ENCODE measurements at regions of chr4 and their contacts with region 1.

Region 1: GRCh38 chr4:6873792-6874461 is 35.7 kb upstream of the TBC1D14 start:
- DNase-seq: no peak
- H3K4me3 ChIP-seq: no peak overlapping the region
- H3K27ac ChIP-seq: no peak overlapping the region
- H3K27me3 ChIP-seq: no peaks in the 10 kb centered on the region
- CTCF ChIP-seq: peak; percentile 87

Region 2: GRCh38 chr4:6608758-6609414 is 265.0 kb before region 1 on chr4:
- CTCF ChIA-PET with region 1: no interaction called
- POLR2A ChIA-PET with region 1: no interaction called
- DNase-seq: no peak
- H3K4me3 ChIP-seq: no peak overlapping the region
- H3K27ac ChIP-seq: no peak overlapping the region
- H3K27me3 ChIP-seq: no peaks in the 10 kb centered on the region
- CTCF ChIP-seq: no peak

Region 3: GRCh38 chr4:6716018-6716911 is 157.7 kb before region 1 on chr4 and contains the start of gene BLOC1S4:
- CTCF ChIA-PET with region 1: interaction called, 197 read pairs
- POLR2A ChIA-PET with region 1: no interaction called
- DNase-seq: peak; percentile 85
- H3K4me3 ChIP-seq: peak within 1 kb of the TSS; percentile 94
- H3K27ac ChIP-seq: peak within 1 kb of the TSS; percentile 39
- H3K27me3 ChIP-seq: peaks cover 3% of the 10 kb centered on the region
- CTCF ChIP-seq: no peak
- polyA plus RNA-seq, gene BLOC1S4: 14.5 and 15.4 TPM in 2 replicates

Region 4: DNA sequence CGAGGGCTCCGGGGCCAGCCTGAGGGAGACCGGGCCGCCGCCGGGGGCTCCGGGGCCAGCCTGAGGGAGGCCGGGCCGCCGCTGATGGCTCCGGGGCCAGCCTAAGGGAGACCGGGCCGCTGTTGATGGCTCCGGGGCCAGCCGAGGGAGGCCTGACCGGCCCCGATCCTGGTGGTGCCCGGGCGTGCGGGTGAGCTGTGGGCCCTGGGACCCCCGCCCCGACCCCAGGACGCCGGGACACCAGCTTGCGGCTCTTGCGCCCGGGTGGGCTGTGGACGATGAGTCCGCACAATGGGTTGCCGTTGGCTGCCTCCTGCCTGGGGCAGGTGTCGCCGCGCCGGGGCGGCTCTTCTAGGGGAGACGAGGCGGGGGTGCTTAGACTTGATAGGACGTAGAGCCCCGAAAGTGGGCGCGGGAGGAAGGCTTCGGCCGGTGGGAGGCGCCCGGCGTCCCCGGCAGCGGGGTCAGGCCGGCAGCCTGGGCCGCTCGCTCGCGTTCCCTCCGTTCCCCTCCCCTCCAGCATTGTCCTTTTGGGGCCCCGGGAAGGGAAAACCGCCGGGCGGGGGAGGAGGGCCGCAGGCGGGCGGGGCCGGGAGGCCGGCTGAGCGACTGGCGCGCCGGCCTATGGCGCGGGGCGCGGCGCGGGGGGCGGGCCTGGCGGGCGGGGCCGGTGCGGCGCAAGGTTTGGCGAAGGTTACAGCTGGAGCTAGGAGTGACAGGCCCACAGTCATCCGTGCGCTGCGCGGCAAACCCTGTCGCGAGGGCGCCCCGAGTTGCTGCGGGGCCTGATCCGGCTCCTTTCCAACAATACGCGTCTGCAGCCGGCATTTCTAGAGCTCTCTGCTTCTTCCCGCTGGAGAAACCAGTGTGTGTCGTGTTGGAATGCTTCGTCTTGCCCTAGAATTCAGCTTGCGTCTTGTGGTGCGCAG is 90.6 kb before region 1 on chr4:
- CTCF ChIA-PET with region 1: interaction called, 16 read pairs
- POLR2A ChIA-PET with region 1: no interaction called
- DNase-seq: peak; percentile 38
- H3K4me3 ChIP-seq: peak overlapping the region; percentile 87
- H3K27ac ChIP-seq: peak overlapping the region; percentile 91
- H3K27me3 ChIP-seq: no peaks in the 10 kb centered on the region
- CTCF ChIP-seq: no peak

Region 5: GRCh38 chr4:6855692-6856297 is 18.1 kb before region 1 on chr4:
- CTCF ChIA-PET with region 1: interaction called, 25 read pairs
- POLR2A ChIA-PET with region 1: no interaction called
- DNase-seq: peak; percentile 74
- H3K4me3 ChIP-seq: no peak overlapping the region
- H3K27ac ChIP-seq: peak overlapping the region; percentile 93
- H3K27me3 ChIP-seq: no peaks in the 10 kb centered on the region
- CTCF ChIP-seq: no peak

Region 6: GRCh38 chr4:6909073-6909965 is 35.4 kb after region 1 on chr4 and contains the start of gene TBC1D14:
- CTCF ChIA-PET with region 1: interaction called, 11 read pairs
- POLR2A ChIA-PET with region 1: interaction called, 5 read pairs
- DNase-seq: peak; percentile 51
- H3K4me3 ChIP-seq: peak within 1 kb of the TSS; percentile 73
- H3K27ac ChIP-seq: peak within 1 kb of the TSS; percentile 94
- H3K27me3 ChIP-seq: peaks cover 3% of the 10 kb centered on the region
- CTCF ChIP-seq: peak; percentile 23; the same call in 1 of the 2 replicates
- polyA plus RNA-seq, gene TBC1D14: 46.3 and 47.1 TPM in 2 replicates

Region 7: DNA sequence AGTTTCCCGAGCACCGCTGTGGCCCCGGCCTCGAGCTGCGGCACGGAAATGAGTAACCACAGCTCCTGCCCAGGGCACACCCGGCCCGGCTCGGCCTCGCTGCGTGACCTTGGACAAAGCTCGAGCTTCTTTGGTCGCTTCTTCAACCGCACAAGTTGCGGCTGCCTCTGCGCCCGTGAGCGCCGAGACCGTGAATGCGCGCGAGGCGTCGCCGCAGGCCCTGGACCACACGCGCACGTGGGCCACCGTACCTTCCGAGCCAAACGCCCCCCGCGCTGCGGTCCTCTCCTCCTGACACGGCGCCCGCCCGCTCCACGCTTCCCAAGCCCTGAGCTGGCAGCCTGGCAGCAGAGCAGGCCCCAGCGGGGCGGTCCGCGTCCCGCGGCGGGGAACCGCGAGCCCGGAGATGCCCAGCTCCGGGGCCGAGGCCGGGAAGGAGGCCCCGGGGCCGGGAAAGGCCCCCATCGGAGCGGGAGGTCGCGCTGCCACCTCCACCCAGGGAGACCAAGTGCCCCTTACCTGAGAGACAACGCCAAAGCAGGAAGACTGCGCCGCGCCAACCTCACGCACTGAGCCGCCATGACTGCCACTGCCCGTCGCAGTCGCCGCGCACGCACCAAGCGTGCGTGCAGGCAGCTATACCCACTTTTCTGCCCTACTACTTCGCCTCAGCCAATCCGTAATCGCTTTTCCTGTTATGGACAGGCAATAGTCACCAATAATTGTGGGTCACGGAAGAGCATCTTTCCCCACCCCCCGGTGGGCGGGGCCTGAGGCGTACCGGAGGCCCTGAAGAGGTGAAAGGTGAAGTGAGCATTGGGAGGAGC is 193.7 kb after region 1 on chr4 and contains the start of gene GRPEL1:
- CTCF ChIA-PET with region 1: interaction called, 30 read pairs
- POLR2A ChIA-PET with region 1: interaction called, 3 read pairs
- DNase-seq: peak; percentile 97
- H3K4me3 ChIP-seq: peak within 1 kb of the TSS; percentile 87
- H3K27ac ChIP-seq: peak within 1 kb of the TSS; percentile 73
- H3K27me3 ChIP-seq: peaks cover 12% of the 10 kb centered on the region
- CTCF ChIP-seq: no peak
- polyA plus RNA-seq, gene GRPEL1: 34.5 and 39.4 TPM in 2 replicates

Measured in AG04450 (cell line).